Activated CD8-positive, alpha-beta T cell treated with anti-CD3 and anti-CD28 coated beads, Interleukin-2, amount 10 ng/mL, durations not matched to agents 7 days and 5 days (primary cell): ENCODE measurements at regions of chr6 and their contacts with region 1.

Region 1: DNA sequence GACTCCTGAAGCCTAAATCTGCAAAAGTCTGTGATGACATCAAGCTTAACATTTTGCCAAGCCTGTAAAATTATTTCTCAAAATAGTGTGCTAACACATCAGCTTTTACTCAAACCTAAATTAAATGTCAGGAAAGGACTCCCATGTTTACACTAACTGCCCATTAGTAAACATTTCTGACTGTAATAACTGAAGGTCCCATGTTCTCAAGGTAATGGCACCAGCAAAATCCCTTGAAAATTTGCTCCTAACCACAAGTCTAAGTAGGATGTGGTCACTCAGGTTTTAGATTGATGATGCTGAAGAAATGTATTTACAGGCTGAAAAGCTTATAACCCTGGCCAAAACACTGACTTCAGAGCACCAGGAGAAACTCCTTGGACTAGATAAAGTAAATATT is 33.0 kb downstream of the BACH2 start:
- DNase-seq: no peak
- ATAC-seq: peak; percentile 25
- H3K4me3 Mint-ChIP-seq: no peak overlapping the region
- H3K27ac Mint-ChIP-seq: peak overlapping the region; percentile 39
- H3K4me1 Mint-ChIP-seq: peaks cover 96% of the 10 kb centered on the region
- H3K27me3 Mint-ChIP-seq: no peaks in the 10 kb centered on the region

Region 2: DNA sequence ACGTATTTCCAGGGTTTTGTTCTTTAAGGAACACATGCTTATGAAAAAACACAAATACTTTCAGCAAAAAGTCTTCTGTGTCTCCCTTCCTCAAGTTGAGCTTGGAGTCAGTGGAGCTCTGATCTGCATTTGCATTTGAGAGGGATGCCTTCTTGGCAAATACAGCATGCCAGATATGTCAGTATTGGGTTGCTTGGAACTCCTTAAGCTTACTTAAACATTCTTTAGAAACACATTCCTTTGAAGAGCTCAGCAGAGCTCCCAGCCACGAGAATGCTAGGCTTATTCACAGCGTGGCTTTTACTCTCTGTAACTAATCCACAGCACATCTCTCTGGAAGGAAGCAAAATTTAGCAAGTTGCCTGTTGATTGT is 762.4 kb before region 1 on chr6:
- CTCF ChIA-PET with region 1: no interaction called
- POLR2A ChIA-PET with region 1: no interaction called
- DNase-seq: no peak
- ATAC-seq: no peak
- H3K4me3 Mint-ChIP-seq: no peak overlapping the region
- H3K27ac Mint-ChIP-seq: no peak overlapping the region
- H3K4me1 Mint-ChIP-seq: no peaks in the 10 kb centered on the region
- H3K27me3 Mint-ChIP-seq: peaks cover 11% of the 10 kb centered on the region

Region 3: GRCh38 chr6:89680150-89680549 is 583.5 kb before region 1 on chr6:
- CTCF ChIA-PET with region 1: no interaction called
- POLR2A ChIA-PET with region 1: no interaction called
- DNase-seq: no peak
- ATAC-seq: no peak
- H3K4me3 Mint-ChIP-seq: no peak overlapping the region
- H3K27ac Mint-ChIP-seq: no peak overlapping the region
- H3K4me1 Mint-ChIP-seq: no peaks in the 10 kb centered on the region
- H3K27me3 Mint-ChIP-seq: no peaks in the 10 kb centered on the region

Region 4: GRCh38 chr6:89805814-89806371 is 457.7 kb before region 1 on chr6:
- CTCF ChIA-PET with region 1: no interaction called
- POLR2A ChIA-PET with region 1: no interaction called
- DNase-seq: no peak
- ATAC-seq: no peak
- H3K4me3 Mint-ChIP-seq: no peak overlapping the region
- H3K27ac Mint-ChIP-seq: no peak overlapping the region
- H3K4me1 Mint-ChIP-seq: peaks cover 9% of the 10 kb centered on the region
- H3K27me3 Mint-ChIP-seq: no peaks in the 10 kb centered on the region

Region 5: GRCh38 chr6:90251295-90251992 is 12.2 kb before region 1 on chr6:
- CTCF ChIA-PET with region 1: interaction called, 16 read pairs
- POLR2A ChIA-PET with region 1: interaction called, 5 read pairs
- DNase-seq: no peak
- ATAC-seq: peak; percentile 22
- H3K4me3 Mint-ChIP-seq: peak overlapping the region; percentile 9
- H3K27ac Mint-ChIP-seq: peak overlapping the region; percentile 75
- H3K4me1 Mint-ChIP-seq: peaks cover 78% of the 10 kb centered on the region
- H3K27me3 Mint-ChIP-seq: no peaks in the 10 kb centered on the region